Activated CD4-positive, alpha-beta T cell treated with anti-CD3 and anti-CD28 coated beads for 36 hours (primary cell): ENCODE measurements at regions of chr12 and their contacts with region 1.

Region 1: DNA sequence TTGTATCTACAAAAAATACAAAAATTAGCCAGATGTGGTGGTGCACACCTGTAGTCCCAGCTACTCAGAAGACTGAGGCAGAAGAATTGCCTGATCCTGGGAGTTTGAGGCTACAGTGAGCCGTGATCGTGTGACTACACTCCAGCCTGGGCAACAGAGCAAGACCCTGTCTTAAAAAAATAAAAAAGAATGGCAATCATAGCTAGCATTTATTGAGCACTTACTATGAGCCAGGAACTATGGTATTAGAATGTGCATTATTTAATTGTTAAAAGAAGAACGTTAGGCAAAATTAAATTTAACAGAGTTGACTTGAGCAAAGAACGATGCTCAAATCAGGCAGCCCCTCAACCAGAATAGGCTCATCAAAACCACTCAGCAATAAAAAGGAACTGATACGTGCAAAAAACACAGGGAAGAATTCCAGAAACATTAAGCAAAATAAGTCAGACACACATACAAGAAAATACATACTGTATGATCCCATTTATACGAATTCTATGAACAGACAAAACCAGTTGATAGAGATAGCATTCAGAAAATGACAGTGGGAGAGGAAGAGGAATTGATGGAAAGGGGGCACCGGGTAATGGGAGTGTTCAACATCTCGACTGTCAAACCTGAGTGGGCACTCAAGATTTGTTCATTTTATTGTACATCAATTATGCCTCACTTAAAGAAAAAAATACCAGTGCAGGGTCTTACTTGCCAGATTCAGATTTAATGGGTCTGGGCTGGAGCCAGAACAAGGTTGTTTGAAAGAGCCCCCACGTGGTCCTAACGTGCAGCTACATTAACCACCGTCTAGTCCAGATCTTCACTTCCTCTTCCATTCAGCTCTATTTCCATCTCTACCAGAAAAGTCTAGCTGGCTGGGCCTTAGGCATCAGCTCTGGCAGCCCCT is 8.0 kb downstream of the SCNN1A start:
- DNase-seq: peak; percentile 60
- ATAC-seq: peak; percentile 57
- H3K4me3 Mint-ChIP-seq: no peak overlapping the region
- H3K27ac Mint-ChIP-seq: no peak overlapping the region
- H3K4me1 Mint-ChIP-seq: peaks cover 32% of the 10 kb centered on the region
- H3K27me3 Mint-ChIP-seq: no peaks in the 10 kb centered on the region

Region 2: DNA sequence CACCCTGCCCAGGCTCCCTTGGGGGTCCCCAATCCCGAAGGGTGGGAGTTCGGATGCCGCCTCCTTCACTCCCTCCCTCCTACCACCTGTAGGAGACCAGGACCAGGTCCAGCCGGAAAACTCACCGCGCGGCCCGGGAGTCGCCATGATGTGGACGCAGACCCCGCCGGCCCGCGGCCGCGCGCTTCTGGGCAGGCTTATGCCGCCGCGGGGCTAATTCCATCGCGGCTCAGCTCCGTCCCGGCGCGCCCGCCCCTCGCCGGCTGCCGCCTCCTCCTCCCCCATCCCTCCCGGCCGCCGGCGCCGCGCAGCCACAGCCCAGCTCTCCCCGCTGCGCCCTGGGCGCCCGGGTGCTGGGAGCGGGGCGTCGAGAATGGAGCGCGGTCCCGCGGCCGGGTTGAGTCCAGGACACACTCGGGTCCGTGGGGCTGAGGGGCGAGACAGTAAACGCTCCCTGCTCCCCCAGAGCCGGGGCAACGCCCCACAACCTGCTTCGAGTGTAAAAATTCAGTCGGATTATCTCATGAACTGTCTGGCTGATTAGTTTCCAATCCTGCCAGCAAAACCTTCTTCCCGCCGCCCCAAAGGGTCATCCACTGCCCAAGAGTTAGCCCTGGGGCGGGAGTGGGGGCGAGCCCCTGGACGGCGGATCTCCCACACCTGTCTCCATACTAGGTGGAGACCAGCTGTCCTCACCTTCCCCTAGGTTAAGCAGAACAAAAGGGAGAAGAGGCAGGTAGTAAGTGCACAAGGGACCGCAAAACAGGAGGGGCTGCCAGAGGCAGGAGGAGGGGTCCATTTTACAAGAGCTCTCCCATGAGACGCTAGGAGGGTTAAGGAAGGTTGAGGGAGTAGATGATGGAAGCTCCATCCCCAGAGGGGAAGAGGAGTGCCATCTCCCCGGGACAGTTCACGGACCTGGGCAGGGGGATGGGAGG is 422.0 kb before region 1 on chr12 and contains the start of gene ANO2:
- CTCF ChIA-PET with region 1: no interaction called
- POLR2A ChIA-PET with region 1: no interaction called
- intact Hi-C with region 1: no loop called
- DNase-seq: no peak
- ATAC-seq: no peak
- H3K4me3 Mint-ChIP-seq: no peak within 1 kb of the TSS
- H3K27ac Mint-ChIP-seq: no peak within 1 kb of the TSS
- H3K4me1 Mint-ChIP-seq: peaks cover 1% of the 10 kb centered on the region
- H3K27me3 Mint-ChIP-seq: peaks cover 57% of the 10 kb centered on the region
- total RNA-seq, gene ANO2: not detected

Region 3: DNA sequence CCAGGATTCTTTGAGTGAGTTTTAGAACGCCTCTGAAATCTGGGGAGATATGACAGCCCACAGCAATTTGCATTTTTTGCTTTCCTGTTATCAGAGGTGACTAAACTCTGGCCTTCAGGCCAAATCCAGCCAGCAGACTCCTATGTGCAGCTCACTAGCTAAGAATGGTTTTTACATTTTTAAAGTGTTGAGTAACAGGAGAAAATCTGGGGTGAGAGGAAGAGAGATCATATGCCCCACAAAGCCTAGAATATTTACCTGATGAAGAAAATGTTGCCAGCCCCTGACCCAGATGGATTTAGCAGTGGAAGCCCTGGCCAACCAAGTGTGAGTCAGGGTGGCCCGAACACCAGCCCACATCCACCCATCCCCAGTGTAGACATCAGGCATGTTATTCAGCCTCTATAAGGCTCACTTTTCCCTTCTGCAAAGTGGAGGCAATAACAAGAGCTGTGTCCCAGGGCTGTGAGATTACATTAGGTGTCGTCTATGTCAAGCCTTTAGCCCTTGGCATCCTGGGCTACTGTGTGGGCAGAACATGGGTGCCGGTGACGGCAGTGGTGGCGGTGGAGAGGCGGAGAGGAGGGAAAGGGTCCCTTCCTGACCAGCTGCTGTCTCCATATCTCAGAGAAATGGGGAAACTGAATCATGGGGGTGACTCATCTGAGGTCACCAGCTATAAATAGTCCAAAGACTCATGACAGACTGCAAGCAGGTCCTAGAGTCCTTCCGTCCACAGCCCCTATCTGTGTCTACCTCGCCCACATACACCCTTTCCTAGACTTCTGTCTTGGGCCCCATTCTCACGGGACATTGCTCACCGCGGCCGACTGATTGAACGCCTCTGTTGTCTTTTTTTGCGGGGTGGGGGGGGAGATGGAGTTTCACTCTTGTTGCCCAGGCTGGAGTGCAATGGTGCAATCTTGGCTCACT is 199.7 kb before region 1 on chr12:
- CTCF ChIA-PET with region 1: no interaction called
- POLR2A ChIA-PET with region 1: no interaction called
- intact Hi-C with region 1: no loop called
- DNase-seq: peak; percentile 84
- ATAC-seq: peak; percentile 89
- H3K4me3 Mint-ChIP-seq: peak overlapping the region; percentile 26
- H3K27ac Mint-ChIP-seq: peak overlapping the region; percentile 87
- H3K4me1 Mint-ChIP-seq: peaks cover 32% of the 10 kb centered on the region
- H3K27me3 Mint-ChIP-seq: no peaks in the 10 kb centered on the region

Region 4: GRCh38 chr12:6323340-6323994 is 43.9 kb before region 1 on chr12:
- CTCF ChIA-PET with region 1: interaction called, 7 read pairs
- POLR2A ChIA-PET with region 1: interaction called, 3 read pairs
- intact Hi-C with region 1: loop called in 1 of 2 experiments (anchors 1 kb)
- DNase-seq: peak; percentile 58
- ATAC-seq: peak; percentile 81
- H3K4me3 Mint-ChIP-seq: peak overlapping the region; percentile 24
- H3K27ac Mint-ChIP-seq: peak overlapping the region; percentile 89
- H3K4me1 Mint-ChIP-seq: peaks cover 32% of the 10 kb centered on the region
- H3K27me3 Mint-ChIP-seq: no peaks in the 10 kb centered on the region

Region 5: DNA sequence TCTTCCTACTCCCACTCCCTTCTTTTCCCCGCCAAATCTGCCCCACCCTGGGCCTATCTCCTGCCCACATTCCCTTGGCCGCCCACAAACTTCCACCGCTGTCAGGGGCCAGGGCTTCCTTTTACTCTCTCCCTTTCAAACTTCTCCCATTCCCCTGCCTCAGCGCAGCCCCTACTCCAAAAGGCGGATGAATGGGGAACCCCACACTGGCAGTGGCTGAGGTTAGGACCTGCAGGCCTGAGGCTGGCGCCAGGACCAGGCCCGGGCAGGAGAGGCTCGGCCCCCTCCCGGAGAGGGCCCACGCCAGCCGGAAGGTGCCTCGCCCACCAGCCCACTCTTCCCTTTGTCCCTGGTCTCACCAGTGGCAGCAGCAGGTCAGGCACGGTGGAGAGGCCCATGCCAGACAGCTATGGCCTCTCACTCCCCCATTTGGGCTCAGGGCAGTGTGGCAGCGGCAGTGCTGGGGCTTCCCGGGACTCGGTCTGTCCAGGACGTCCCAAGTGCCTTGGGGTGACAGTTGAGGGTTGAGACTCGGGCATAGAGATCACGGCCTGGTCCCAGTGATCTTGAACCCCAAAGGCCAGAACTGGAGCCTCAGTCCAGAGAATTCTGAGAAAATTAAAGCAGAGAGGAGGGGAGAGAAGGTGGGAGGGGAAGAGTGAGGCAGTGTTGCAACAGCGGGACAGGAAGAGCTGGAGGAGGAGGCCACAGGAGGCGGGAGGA is 25.7 kb before region 1 on chr12 and contains the start of gene TNFRSF1A:
- CTCF ChIA-PET with region 1: interaction called, 13 read pairs
- POLR2A ChIA-PET with region 1: interaction called, 6 read pairs
- intact Hi-C with region 1: loop called (anchors 1 to 5 kb)
- DNase-seq: peak; percentile 74
- ATAC-seq: peak; percentile 45
- H3K4me3 Mint-ChIP-seq: no peak within 1 kb of the TSS
- H3K27ac Mint-ChIP-seq: no peak within 1 kb of the TSS
- H3K4me1 Mint-ChIP-seq: peaks cover 37% of the 10 kb centered on the region
- H3K27me3 Mint-ChIP-seq: no peaks in the 10 kb centered on the region
- total RNA-seq, gene TNFRSF1A: 42.1 to 58.7 TPM

Region 6: GRCh38 chr12:6592087-6592486 is 224.8 kb after region 1 on chr12:
- CTCF ChIA-PET with region 1: no interaction called
- POLR2A ChIA-PET with region 1: no interaction called
- intact Hi-C with region 1: no loop called
- DNase-seq: no peak
- ATAC-seq: no peak
- H3K4me3 Mint-ChIP-seq: no peak overlapping the region
- H3K27ac Mint-ChIP-seq: peak overlapping the region; percentile 11
- H3K4me1 Mint-ChIP-seq: peaks cover 7% of the 10 kb centered on the region
- H3K27me3 Mint-ChIP-seq: no peaks in the 10 kb centered on the region

Region 7: GRCh38 chr12:7092229-7092985 is 725.1 kb after region 1 on chr12 and contains the start of gene C1R:
- CTCF ChIA-PET with region 1: no interaction called
- POLR2A ChIA-PET with region 1: no interaction called
- intact Hi-C with region 1: no loop called
- DNase-seq: peak; percentile 85
- ATAC-seq: peak; percentile 86
- H3K4me3 Mint-ChIP-seq: peak within 1 kb of the TSS; percentile 59
- H3K27ac Mint-ChIP-seq: peak within 1 kb of the TSS; percentile 80
- H3K4me1 Mint-ChIP-seq: peaks cover 6% of the 10 kb centered on the region
- H3K27me3 Mint-ChIP-seq: no peaks in the 10 kb centered on the region
- total RNA-seq, gene C1R: 1.4 to 2.2 TPM